Ascending aorta (tissue), 2 donors: ENCODE measurements at regions of chr2 and their contacts with region 1.

Region 1: DNA sequence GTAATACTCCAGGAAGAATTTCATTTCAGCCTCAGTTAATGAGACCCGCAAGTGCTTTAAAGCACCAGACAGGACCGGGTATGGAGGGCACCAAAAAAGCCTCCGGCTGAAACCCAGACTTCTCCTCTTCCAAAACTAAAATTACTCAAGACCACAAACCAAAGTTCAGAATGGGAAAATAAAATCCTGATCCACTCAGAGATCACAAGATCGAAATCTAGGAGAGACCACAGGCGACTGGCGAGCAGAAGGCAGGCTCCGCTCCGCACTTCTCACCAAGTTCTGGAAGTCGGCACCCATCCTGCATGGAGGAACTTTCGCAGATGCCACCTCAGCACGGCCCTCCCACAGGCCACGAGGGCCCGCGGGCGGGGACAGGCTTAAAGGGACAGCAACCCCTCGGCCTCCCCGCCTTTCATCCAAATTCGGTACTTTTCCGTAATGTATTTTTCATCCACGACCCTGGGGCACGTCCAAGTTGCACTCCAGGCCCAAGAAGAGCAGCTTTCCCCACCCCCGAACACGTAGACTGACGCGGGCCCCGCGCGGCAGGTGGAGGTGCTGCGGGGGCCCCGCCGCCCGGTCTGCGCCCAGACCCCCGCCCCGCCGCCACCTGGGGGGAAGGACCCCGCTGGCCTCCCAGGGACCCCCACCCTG is 43.7 kb downstream of the HDLBP start:
- DNase-seq: peak; percentile 70 to 93
- H3K4me3 ChIP-seq: peak overlapping the region; percentile 98 to 100
- H3K27ac ChIP-seq: peak overlapping the region; percentile 95 to 98
- H3K4me1 ChIP-seq: peaks cover 14 to 28% of the 10 kb centered on the region in 2 donors
- H3K27me3 ChIP-seq: no peaks in the 10 kb centered on the region
- CTCF ChIP-seq: no peak

Region 2: GRCh38 chr2:240921251-240921994 is 350.3 kb before region 1 on chr2:
- intact Hi-C with region 1: no loop called
- DNase-seq: peak; percentile 43 to 86
- H3K4me3 ChIP-seq: no peak overlapping the region
- H3K27ac ChIP-seq: peak overlapping the region; percentile 56 to 63
- H3K4me1 ChIP-seq: peaks cover 2 to 5% of the 10 kb centered on the region in 2 donors
- H3K27me3 ChIP-seq: no peaks in the 10 kb centered on the region
- CTCF ChIP-seq: no peak

Region 3: DNA sequence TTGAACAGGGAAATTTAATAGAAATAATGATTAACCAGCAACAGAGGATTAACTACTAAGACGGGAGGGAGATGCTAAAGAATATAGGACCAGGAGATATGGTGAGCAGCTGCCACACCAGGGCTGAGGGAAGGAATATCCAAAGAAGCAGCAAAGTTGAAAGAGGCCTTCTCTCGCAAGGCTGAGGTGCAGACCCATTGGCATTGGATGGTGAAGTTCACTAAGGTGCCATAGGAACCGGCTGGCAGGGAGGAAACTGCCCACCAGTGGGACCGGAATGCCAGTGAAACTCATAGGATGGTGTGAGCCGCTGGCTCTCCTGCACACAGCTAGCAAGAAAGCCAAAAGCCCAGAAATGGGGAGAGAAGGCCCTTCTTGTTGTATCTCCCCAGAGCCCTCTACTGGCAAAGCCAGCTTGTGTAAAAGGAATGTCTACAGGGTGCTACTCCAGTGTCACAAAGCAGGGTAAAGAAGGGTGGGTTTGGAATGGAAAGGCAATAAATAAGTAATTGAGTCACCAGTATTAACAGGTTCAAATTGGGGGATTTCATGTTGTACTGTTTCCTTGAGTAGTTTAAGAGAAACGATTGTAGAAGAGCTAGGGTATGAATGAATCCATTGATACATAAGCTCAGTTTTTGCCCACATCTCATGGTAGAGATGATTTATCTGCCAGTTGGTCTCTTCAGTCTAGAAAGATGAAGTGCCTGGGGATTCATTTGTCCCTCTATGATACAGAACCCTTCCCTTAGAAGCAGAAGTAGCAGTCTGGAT is 120.3 kb after region 1 on chr2:
- intact Hi-C with region 1: loop called (anchors 5 kb)
- DNase-seq: no peak
- H3K4me3 ChIP-seq: no peak overlapping the region
- H3K27ac ChIP-seq: no peak overlapping the region
- H3K4me1 ChIP-seq: no peaks in the 10 kb centered on the region
- H3K27me3 ChIP-seq: no peaks in the 10 kb centered on the region
- CTCF ChIP-seq: peak; percentile 23 to 61 (median 44)